ENCODE measurements at regions of chr2 and their contacts with region 1.

Region 1: DNA sequence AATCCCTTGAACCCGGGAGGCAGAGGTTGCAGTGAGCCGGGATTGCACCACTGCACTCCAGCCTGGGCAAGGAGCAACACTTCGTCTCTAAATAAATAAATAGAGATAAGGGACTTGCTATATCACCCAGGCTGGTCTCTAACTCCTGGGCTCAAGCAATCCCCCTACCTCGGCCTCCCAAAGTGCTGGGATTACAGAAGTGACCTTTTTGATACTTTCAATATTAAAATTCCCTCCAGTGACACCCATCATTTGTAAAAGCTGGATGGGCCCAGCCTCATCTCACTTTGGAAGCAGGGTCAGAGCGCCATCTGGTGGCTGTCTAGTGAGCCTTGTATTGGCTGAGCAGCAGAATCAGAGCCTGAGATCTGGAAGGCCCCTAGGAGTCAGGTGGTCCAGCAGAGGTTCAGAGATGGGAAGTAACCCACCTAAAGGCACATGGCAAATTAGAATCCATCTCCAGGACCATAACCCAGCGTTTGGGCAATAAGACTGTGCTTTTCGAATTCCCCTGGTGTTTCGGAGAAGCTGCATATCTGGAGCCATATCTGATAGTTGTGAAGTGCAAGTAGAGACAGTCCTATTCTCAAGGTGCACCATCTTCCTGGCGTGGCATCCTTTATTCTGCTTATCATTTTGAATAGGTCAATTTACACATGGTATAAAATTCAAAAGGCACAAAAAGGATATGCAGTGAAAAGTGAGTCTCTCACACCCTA is 18.3 kb upstream of the SLC35F6 start:
- DNase-seq: peak; percentile 85
- H3K4me3 ChIP-seq: no peak overlapping the region
- H3K27ac ChIP-seq: no peak overlapping the region
- H3K4me1 ChIP-seq: peaks cover 0 to 3% of the 10 kb centered on the region in 2 experiments; a peak in 1 of 4 replicates
- H3K27me3 ChIP-seq: no peaks in the 10 kb centered on the region
- CTCF ChIP-seq: peak; percentile 99
- EP300 ChIP-seq: no peak
- RAD21 ChIP-seq: peak; percentile 100

Region 2: GRCh38 chr2:26469092-26469710 is 276.6 kb before region 1 on chr2:
- CTCF ChIA-PET with region 1: interaction called, 12 read pairs
- POLR2A ChIA-PET with region 1: no interaction called
- DNase-seq: peak; percentile 83
- H3K4me3 ChIP-seq: peak overlapping the region in 1 of 2 experiments; percentile 31; a peak in 2 of 4 replicates
- H3K27ac ChIP-seq: no peak overlapping the region
- H3K4me1 ChIP-seq: no peaks in the 10 kb centered on the region
- H3K27me3 ChIP-seq: no peaks in the 10 kb centered on the region
- CTCF ChIP-seq: peak; percentile 79
- EP300 ChIP-seq: no peak
- RAD21 ChIP-seq: peak; percentile 79

Region 3: GRCh38 chr2:26598336-26598995 is 147.3 kb before region 1 on chr2:
- CTCF ChIA-PET with region 1: interaction called, 944 read pairs
- POLR2A ChIA-PET with region 1: interaction called, 4 read pairs
- DNase-seq: no peak
- H3K4me3 ChIP-seq: no peak overlapping the region
- H3K27ac ChIP-seq: no peak overlapping the region
- H3K4me1 ChIP-seq: no peaks in the 10 kb centered on the region
- H3K27me3 ChIP-seq: peaks cover 30% of the 10 kb centered on the region; the same call in 1 of the 2 replicates
- CTCF ChIP-seq: no peak
- EP300 ChIP-seq: no peak
- RAD21 ChIP-seq: no peak

Region 4: GRCh38 chr2:26652361-26653041 is 93.3 kb before region 1 on chr2:
- CTCF ChIA-PET with region 1: interaction called, 16 read pairs
- POLR2A ChIA-PET with region 1: no interaction called
- DNase-seq: peak; percentile 92
- H3K4me3 ChIP-seq: no peak overlapping the region
- H3K27ac ChIP-seq: peak overlapping the region in 1 of 2 experiments; percentile 82; a peak in 2 of 4 replicates
- H3K4me1 ChIP-seq: peaks cover 0 to 32% of the 10 kb centered on the region in 2 experiments; a peak in 2 of 4 replicates
- H3K27me3 ChIP-seq: peaks cover 17% of the 10 kb centered on the region; the same call in 1 of the 2 replicates
- CTCF ChIP-seq: no peak
- EP300 ChIP-seq: no peak; a peak in 1 of 4 replicates
- RAD21 ChIP-seq: no peak

Region 5: GRCh38 chr2:26692279-26692896 is 53.4 kb before region 1 on chr2 and contains the start of gene KCNK3:
- CTCF ChIA-PET with region 1: interaction called, 22 read pairs
- POLR2A ChIA-PET with region 1: no interaction called
- DNase-seq: peak; percentile 97
- H3K4me3 ChIP-seq: peak within 1 kb of the TSS; percentile 31 to 44; a peak in 3 of 4 replicates
- H3K27ac ChIP-seq: peak within 1 kb of the TSS in 1 of 2 experiments; percentile 93; a peak in 2 of 4 replicates
- H3K4me1 ChIP-seq: peaks cover 5 to 28% of the 10 kb centered on the region in 2 experiments; a peak in 1 of 4 replicates
- H3K27me3 ChIP-seq: peaks cover 43% of the 10 kb centered on the region
- CTCF ChIP-seq: no peak
- EP300 ChIP-seq: peak in 1 of 2 experiments; percentile 51; a peak in 1 of 4 replicates
- RAD21 ChIP-seq: no peak
- polyA plus RNA-seq, gene KCNK3: 0.16 and 0.31 TPM in 2 replicates

Region 6: GRCh38 chr2:26720322-26721166 is 25.2 kb before region 1 on chr2:
- CTCF ChIA-PET with region 1: interaction called, 41 read pairs
- POLR2A ChIA-PET with region 1: no interaction called
- DNase-seq: peak; percentile 92
- H3K4me3 ChIP-seq: no peak overlapping the region
- H3K27ac ChIP-seq: peak overlapping the region; percentile 8 to 30; a peak in 1 of 4 replicates
- H3K4me1 ChIP-seq: peaks cover 25 to 62% of the 10 kb centered on the region in 2 experiments; a peak in 3 of 4 replicates
- H3K27me3 ChIP-seq: no peaks in the 10 kb centered on the region
- CTCF ChIP-seq: no peak
- EP300 ChIP-seq: peak in 1 of 2 experiments; percentile 76; a peak in 2 of 4 replicates
- RAD21 ChIP-seq: peak; percentile 21; the same call in 1 of the 2 replicates

Region 7: GRCh38 chr2:26764078-26764887 is 18.5 kb after region 1 on chr2 and contains the start of gene SLC35F6:
- CTCF ChIA-PET with region 1: interaction called, 36 read pairs
- POLR2A ChIA-PET with region 1: no interaction called
- DNase-seq: peak; percentile 99
- H3K4me3 ChIP-seq: peak within 1 kb of the TSS; percentile 85 to 96
- H3K27ac ChIP-seq: peak within 1 kb of the TSS; percentile 63 to 84
- H3K4me1 ChIP-seq: peaks cover 6 to 20% of the 10 kb centered on the region in 2 experiments; a peak in 3 of 4 replicates
- H3K27me3 ChIP-seq: no peaks in the 10 kb centered on the region
- CTCF ChIP-seq: no peak
- EP300 ChIP-seq: no peak
- RAD21 ChIP-seq: no peak
- polyA plus RNA-seq, gene SLC35F6: 15.9 and 16.0 TPM in 2 replicates